Aorta (tissue), 5 donors: ENCODE measurements at regions of chr17 and their contacts with region 1.

Region 1: DNA sequence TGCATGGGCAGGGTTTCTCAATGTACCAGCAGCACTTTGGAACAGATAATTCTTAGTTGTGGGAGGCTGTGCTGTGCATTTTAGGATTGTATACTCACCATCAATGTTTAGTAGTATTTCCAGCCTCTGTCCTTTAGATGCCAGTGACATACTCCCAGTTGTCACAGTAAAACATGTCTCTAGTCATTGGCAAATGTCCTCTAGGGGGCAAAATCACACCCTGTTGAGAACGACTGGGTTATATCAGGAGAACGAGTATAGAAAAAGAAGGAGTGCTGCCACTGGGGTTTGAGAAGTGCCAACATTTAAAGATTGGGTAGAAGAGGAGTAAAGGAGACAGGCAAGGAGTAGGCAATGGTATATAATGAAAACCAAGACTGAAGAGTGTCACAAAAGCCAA is 37.9 kb upstream of the SMIM36 start:
- DNase-seq: no peak
- ATAC-seq: no peak
- H3K4me3 ChIP-seq: no peak overlapping the region
- H3K27ac ChIP-seq: no peak overlapping the region
- H3K4me1 ChIP-seq: no peaks in the 10 kb centered on the region
- H3K27me3 ChIP-seq: peaks cover 0 to 3% of the 10 kb centered on the region in 2 donors

Region 2: DNA sequence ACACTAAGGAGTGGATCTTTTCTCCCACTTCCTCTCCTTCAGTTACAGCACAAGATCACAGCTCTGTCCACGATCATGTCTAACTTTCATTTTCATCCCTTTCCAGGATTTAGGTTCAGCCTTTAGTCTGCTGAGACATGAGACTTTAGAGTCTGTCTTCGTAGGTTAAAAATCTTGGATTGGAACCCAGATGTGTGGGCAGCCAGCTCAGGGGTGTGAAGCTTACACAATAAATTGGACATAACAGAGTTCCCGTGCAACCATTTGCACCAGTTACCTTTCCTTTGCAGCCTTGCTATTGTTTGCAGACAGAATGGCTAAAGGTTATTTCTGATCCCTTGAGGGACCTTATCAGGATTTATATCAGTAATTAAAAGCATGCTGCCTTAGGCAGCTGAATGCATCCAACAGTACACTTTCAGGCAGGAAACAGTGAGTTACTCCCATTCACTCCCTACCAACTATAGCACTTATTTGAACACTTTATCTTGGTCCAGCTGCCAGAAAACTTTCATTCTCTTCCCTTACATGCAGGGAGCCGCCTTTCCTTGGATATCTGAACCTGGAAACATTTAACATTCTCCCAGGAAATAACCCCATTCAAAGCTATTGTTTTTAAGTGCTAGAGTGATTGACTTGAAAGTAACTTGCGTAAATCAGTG is 86.2 kb after region 1 on chr17:
- intact Hi-C with region 1: loop called in 1 of 2 experiments (anchors 10 kb)
- DNase-seq: no peak
- ATAC-seq: no peak
- H3K4me3 ChIP-seq: no peak overlapping the region
- H3K27ac ChIP-seq: no peak overlapping the region
- H3K4me1 ChIP-seq: peaks cover 0 to 2% of the 10 kb centered on the region in 2 donors
- H3K27me3 ChIP-seq: no peaks in the 10 kb centered on the region

Region 3: GRCh38 chr17:55959756-55960155 is 410.6 kb after region 1 on chr17:
- intact Hi-C with region 1: no loop called
- DNase-seq: no peak
- ATAC-seq: no peak
- H3K4me3 ChIP-seq: no peak overlapping the region
- H3K27ac ChIP-seq: no peak overlapping the region
- H3K4me1 ChIP-seq: no peaks in the 10 kb centered on the region
- H3K27me3 ChIP-seq: no peaks in the 10 kb centered on the region